Activated CD4-positive, alpha-beta T cell treated with anti-CD3 and anti-CD28 coated beads, Interleukin-2, amount 10 ng/mL, durations not matched to agents 24 days and 14 days (primary cell): ENCODE measurements at regions of chr2 and their contacts with region 1.

Region 1: DNA sequence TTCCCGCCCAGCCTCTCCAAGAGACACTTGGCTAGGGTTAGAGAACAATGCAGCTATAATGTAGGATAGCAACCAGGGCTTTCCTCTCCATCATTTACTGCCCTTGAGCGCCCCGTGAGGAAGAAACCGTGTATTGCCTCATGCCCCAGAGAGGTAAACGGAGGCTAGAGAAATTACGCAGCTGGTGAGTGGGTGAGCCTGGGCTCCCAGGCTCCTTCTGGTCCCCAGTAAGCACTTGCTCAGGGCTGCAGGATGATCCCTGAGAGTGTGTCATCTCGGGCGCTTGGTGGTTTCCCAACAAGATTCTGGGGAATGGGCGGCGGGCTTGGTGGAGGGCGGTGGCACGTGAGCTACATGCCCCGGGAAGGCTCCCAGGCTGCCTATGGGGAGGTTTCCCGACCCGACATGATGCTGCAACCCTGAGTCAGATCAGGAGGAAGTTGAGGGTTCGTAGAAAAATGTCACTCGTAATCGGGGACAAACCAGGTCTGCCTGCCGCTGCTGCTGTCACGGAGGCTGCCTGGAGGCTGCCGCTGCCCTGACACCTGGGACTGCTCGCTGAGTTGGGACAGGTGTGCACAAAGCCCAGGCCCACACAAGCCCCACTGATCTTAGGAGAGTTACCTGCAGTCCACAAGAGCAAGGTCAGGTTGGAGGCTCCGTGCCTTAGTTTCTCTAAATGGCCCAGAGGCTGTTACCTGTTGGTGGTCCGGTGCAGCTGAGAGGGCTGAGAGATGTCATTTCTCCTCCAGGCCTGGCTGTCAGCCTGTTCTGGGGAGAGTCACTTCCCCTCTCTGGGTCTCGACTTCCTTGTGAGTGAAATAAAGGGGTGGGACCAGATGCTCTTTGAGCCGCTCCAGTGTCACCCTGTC is at the start of gene GPR55:
- DNase-seq: peak; percentile 76
- H3K4me3 Mint-ChIP-seq: peak within 1 kb of the TSS; percentile 66
- H3K27ac Mint-ChIP-seq: peak within 1 kb of the TSS; percentile 82
- H3K4me1 Mint-ChIP-seq: peaks cover 42% of the 10 kb centered on the region
- H3K27me3 Mint-ChIP-seq: peaks cover 24% of the 10 kb centered on the region
- total RNA-seq, gene GPR55: 0.23 and 0.38 TPM in 2 replicates

Region 2: DNA sequence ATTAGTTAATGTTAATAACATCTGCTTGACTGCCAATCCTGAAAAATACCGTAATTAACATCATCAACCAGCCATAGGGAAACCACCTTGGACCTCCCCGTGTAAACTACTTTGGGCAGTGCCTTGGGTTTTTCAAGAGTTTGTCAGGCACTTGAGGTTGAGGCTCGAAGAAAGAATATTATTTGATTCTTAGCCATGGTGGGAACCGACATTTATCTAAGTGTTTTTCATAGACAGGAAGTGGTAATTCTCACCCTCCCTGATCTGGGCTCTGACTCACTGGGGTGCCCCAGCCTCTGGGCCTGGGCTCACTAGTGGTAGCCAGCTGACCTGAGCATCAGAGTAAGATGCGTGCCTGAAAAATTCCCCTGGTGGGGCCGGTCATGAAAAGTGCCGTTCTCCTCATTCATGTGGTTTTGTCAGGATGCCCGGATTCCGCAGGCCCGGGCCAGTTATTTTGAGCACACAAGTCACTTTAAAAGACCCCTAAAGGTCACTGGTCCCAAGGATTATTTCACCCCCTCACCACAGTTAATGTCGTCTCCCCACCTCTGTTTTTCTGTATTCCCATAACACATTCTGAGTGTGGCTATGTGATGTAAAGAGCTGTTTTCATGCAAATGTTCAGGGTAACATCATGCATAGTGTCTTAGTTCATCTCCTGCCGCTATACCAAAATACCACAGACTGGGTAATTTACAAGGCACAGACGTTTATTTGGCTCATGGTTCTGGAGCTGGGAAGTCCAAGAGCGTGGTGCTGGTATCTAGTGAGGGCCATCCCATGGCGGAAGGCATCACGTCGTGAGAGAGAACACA is 49.6 kb after region 1 on chr2:
- intact Hi-C with region 1: loop called (anchors 1 kb)
- DNase-seq: peak; percentile 86
- H3K4me3 Mint-ChIP-seq: peak overlapping the region; percentile 24
- H3K27ac Mint-ChIP-seq: peak overlapping the region; percentile 61
- H3K4me1 Mint-ChIP-seq: peaks cover 33% of the 10 kb centered on the region
- H3K27me3 Mint-ChIP-seq: peaks cover 28% of the 10 kb centered on the region